Activated CD4-positive, alpha-beta memory T cell treated with anti-CD3 and anti-CD28 coated beads for 36 hours (primary cell): ENCODE measurements at regions of chr1 and their contacts with region 1.

Region 1: DNA sequence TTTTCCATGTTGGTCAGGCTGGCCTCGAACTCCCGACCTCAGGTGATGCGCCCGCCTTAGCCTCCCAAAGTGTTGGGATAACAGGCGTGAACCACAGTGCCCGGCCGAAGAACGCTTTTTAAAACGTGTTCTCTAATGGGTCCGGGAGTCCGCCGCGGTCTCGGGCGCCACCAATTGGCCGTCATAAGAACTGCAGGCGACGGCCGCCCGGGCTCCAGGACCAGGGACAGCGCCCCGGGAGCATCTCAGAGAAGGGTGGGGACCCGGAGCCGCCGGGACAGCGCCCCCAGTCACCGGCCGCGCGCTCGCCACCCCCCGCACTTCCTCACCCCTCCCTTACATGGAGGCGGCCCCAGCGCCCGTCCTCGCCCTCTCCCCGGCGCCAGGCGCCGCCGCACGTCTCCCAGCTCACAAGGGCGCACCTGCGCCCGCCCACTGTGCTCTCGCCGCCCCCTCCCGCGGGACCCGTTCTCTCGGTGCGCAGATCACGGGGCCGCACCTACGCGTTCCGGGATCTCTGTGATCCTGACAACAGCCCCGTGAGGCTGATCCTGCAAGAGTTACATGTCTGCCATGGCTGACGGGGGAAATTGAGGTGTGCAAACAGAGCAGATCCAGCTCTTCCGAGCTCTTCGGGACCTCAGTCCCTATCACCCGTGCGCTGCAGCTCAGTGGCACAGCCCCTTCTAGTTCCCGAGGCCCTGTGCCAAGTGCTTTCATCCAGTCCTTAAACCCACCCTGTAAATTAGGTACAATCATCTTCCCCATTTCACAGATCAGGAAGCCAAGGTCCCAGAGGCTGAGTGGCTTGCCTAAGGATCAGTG is 9.8 kb downstream of the RAP1GAP start:
- DNase-seq: peak; percentile 87
- H3K4me3 Mint-ChIP-seq: peak overlapping the region; percentile 49
- H3K27ac Mint-ChIP-seq: no peak overlapping the region
- H3K4me1 Mint-ChIP-seq: peaks cover 4% of the 10 kb centered on the region
- H3K27me3 Mint-ChIP-seq: peaks cover 18% of the 10 kb centered on the region

Region 2: GRCh38 chr1:21050031-21050430 is 609.3 kb before region 1 on chr1:
- CTCF ChIA-PET with region 1: no interaction called
- POLR2A ChIA-PET with region 1: no interaction called
- intact Hi-C with region 1: no loop called
- DNase-seq: no peak
- H3K4me3 Mint-ChIP-seq: no peak overlapping the region
- H3K27ac Mint-ChIP-seq: no peak overlapping the region
- H3K4me1 Mint-ChIP-seq: no peaks in the 10 kb centered on the region
- H3K27me3 Mint-ChIP-seq: no peaks in the 10 kb centered on the region

Region 3: GRCh38 chr1:21490774-21491553 is 168.3 kb before region 1 on chr1:
- CTCF ChIA-PET with region 1: interaction called, 4 read pairs
- POLR2A ChIA-PET with region 1: no interaction called
- intact Hi-C with region 1: loop called (anchors 5 kb)
- DNase-seq: peak; percentile 59
- H3K4me3 Mint-ChIP-seq: no peak overlapping the region
- H3K27ac Mint-ChIP-seq: no peak overlapping the region
- H3K4me1 Mint-ChIP-seq: peaks cover 8% of the 10 kb centered on the region
- H3K27me3 Mint-ChIP-seq: peaks cover 8% of the 10 kb centered on the region

Region 4: DNA sequence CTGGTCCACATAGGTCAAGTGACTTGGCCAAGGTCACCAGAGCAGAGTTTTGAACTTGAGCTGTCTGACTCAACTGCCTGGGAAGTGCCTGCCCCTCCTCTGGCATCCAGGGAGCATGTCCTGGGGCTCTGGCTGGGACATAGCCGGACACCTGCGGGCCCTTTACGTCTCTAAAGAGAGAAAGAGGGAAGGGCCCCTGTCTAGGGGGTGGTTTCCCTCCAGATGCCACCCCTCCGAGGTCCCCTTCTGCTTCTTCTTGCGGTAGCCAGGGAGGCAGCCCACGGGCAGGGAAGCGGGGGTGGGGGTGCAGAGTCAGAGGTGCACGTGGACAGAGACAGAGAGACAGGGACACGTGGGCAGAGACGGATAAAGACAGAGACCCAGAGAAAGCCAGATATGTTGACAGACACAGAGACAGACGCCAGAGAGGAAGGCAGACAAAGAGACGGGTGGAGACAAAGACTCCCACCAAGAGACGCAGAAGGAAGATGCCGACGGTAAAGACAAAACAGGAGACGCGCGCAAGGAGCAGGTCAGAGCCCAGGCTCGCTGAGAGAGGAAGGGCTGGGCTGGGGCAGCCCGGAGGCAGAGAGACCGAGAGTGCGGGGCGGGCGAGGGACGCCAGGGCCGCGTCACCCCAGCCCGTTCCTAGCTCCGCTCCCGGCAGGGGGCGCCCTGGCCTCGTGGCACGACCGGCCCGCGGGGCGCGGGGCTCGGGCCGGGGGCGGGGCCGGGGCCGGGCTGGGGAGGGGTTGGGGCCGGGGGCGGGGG is 150.5 kb before region 1 on chr1:
- CTCF ChIA-PET with region 1: interaction called, 5 read pairs
- POLR2A ChIA-PET with region 1: no interaction called
- intact Hi-C with region 1: loop called (anchors 2 kb)
- DNase-seq: peak; percentile 73
- H3K4me3 Mint-ChIP-seq: peak overlapping the region; percentile 20
- H3K27ac Mint-ChIP-seq: no peak overlapping the region
- H3K4me1 Mint-ChIP-seq: peaks cover 4% of the 10 kb centered on the region
- H3K27me3 Mint-ChIP-seq: peaks cover 51% of the 10 kb centered on the region

Region 5: GRCh38 chr1:21594935-21595897 is 64.1 kb before region 1 on chr1:
- CTCF ChIA-PET with region 1: interaction called, 6 read pairs
- POLR2A ChIA-PET with region 1: no interaction called
- intact Hi-C with region 1: loop called (anchors 2 kb)
- DNase-seq: peak; percentile 75
- H3K4me3 Mint-ChIP-seq: no peak overlapping the region
- H3K27ac Mint-ChIP-seq: no peak overlapping the region
- H3K4me1 Mint-ChIP-seq: no peaks in the 10 kb centered on the region
- H3K27me3 Mint-ChIP-seq: peaks cover 4% of the 10 kb centered on the region

Region 6: DNA sequence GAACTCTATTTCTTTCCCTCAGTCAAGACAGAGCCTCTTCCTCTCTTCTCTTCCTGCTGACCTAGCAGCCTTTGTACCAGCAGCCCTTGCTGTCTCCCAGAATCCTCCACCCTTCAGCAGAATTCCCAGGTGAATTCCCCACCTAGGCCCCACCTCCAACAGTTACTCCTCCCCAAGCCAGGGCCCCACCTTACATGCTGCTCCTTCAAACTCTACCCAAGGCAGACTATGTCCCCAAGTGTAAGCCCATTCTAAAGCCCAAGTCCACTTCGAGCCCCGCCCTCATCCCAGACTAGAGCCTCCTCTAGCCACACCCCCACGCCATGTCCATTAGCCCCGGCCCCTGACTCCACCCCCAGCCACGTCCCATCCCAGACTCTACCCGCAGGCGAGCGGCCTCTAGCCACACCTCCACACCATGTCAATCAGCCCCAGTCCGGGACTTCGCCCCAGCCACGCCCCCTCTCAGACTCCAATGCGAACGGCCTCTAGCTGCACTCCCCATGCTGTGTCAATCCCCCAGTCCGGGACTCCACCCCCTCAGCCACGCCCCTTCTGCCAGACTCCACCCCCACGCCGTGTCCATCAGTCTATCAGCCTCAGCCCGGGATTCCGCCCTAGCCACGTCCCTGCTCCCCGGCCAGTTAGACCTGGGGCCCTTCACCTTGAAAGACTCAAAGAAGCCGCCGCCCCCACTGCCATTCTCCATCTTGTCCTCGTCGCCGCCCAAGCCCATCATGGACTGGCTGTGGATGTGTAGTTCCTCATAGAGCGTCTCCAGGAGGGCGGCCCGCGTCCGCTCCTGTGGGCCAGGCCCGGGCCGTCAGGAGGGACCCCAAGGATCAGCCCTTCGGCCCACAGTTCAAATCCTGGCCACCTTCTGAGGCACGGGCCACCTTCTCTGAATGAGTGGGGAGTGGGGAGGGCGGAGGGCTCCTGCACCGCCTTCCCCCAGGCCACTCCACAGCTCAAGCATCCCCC is 51.5 kb before region 1 on chr1:
- CTCF ChIA-PET with region 1: no interaction called
- POLR2A ChIA-PET with region 1: no interaction called
- intact Hi-C with region 1: no loop called
- DNase-seq: peak; percentile 89
- H3K4me3 Mint-ChIP-seq: peak overlapping the region; percentile 37
- H3K27ac Mint-ChIP-seq: no peak overlapping the region
- H3K4me1 Mint-ChIP-seq: peaks cover 10% of the 10 kb centered on the region
- H3K27me3 Mint-ChIP-seq: no peaks in the 10 kb centered on the region

Region 7: DNA sequence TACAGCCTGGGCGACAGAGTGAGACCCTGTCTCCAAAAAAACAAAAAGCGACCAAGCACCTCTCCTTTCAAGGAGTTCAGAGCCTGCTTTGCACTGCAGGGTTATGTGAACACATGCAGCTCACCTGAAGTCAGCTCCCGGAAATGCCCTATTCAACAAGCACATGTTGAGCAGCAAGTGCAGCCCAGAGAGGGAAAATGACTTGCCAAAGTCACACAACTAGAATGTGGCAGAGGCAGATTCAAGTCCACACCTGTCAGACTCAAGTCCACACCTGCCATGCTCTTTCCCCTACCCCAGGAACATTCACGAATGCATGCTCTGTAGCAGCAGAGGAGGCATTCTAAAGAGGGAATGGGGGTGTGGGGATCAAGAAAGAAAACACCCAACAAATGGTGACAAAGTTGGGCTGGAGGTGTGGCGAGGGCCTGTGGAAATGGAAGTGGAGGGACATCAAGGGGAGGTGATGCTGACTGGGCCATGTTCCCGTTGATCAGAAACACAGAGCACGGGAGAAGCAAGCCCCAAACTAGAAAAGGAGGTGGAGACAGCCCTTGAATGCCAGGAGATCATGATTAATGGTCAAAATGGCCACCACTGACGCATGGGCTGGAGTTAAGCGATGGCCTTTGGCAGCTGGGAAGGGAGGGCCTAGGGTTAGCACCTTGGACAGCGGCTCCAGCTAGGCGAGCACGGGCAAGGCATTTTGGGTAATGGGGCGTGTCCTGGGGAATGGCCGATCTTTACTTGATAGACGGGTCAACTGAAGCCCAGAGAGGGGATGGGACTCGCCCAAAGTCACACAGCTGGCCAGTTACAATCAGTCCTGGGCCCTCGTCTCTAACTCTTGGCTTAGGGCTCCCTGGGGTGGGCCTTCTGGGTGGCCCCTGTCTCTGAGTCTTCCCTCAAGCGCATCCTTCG is 11.6 kb before region 1 on chr1:
- CTCF ChIA-PET with region 1: interaction called, 5 read pairs
- POLR2A ChIA-PET with region 1: no interaction called
- intact Hi-C with region 1: loop called (anchors 1 kb)
- DNase-seq: peak; percentile 63
- H3K4me3 Mint-ChIP-seq: no peak overlapping the region
- H3K27ac Mint-ChIP-seq: no peak overlapping the region
- H3K4me1 Mint-ChIP-seq: peaks cover 7% of the 10 kb centered on the region
- H3K27me3 Mint-ChIP-seq: peaks cover 16% of the 10 kb centered on the region

Region 8: GRCh38 chr1:21782868-21783678 is 123.8 kb after region 1 on chr1 and contains the start of gene USP48:
- CTCF ChIA-PET with region 1: no interaction called
- POLR2A ChIA-PET with region 1: interaction called, 3 read pairs
- intact Hi-C with region 1: loop called (anchors 5 kb)
- DNase-seq: peak; percentile 98
- H3K4me3 Mint-ChIP-seq: peak within 1 kb of the TSS; percentile 94
- H3K27ac Mint-ChIP-seq: peak within 1 kb of the TSS; percentile 97
- H3K4me1 Mint-ChIP-seq: peaks cover 21% of the 10 kb centered on the region
- H3K27me3 Mint-ChIP-seq: no peaks in the 10 kb centered on the region
- total RNA-seq, gene USP48: 77.2 to 91.1 TPM

Region 9: DNA sequence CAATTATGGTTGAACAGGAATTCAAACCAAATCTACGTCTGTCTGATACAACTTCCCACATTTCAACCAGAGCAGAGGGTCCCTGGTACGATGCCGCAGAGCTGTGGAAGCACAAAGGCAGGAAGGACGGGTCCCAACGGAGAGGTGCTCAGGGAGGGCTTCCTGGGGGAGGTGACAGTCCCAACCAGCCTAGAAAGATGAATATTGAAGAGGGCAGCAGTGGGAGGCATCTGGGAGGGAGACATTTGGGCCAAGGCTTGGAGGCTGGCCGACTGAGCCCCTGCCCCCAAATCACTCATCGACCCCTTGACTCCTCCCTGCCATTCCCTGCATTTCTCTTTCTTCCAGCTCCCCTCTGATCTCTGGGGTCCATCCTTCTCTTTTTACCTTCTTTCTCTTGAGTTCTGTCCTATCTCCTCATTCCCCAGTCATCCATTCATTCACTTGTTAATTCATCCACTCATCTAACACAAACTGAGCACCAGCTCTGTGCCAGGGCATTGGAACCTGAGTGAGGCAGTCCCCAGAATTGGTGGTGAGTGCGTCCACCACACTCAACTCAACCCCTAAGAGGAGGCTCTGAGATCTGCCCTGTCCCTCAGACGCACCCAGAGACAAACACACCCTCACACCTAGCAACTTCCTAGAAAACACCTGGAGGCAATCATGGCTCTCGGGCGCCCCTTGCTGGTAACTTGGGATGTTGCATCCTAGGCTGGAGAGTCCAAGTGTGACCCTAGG is 304.3 kb after region 1 on chr1:
- CTCF ChIA-PET with region 1: interaction called, 4 read pairs
- POLR2A ChIA-PET with region 1: no interaction called
- intact Hi-C with region 1: loop called (anchors 5 kb)
- DNase-seq: peak; percentile 90
- H3K4me3 Mint-ChIP-seq: no peak overlapping the region
- H3K27ac Mint-ChIP-seq: peak overlapping the region; percentile 18
- H3K4me1 Mint-ChIP-seq: peaks cover 2% of the 10 kb centered on the region
- H3K27me3 Mint-ChIP-seq: peaks cover 1% of the 10 kb centered on the region